IMR-90 (cell line): ENCODE measurements at regions of chr2 and their contacts with region 1.

Region 1: GRCh38 chr2:27596627-27597026 is 13.8 kb downstream of the ZNF512 start:
- DNase-seq: peak; percentile 68
- ATAC-seq: peak; percentile 86
- H3K4me3 ChIP-seq: no peak overlapping the region
- H3K27ac ChIP-seq: no peak overlapping the region; the same call in 1 of the 2 replicates
- H3K4me1 ChIP-seq: peaks cover 11% of the 10 kb centered on the region
- H3K27me3 ChIP-seq: no peaks in the 10 kb centered on the region
- CTCF ChIP-seq: no peak
- POLR2A ChIP-seq: no peak
- RAD21 ChIP-seq: no peak

Region 2: DNA sequence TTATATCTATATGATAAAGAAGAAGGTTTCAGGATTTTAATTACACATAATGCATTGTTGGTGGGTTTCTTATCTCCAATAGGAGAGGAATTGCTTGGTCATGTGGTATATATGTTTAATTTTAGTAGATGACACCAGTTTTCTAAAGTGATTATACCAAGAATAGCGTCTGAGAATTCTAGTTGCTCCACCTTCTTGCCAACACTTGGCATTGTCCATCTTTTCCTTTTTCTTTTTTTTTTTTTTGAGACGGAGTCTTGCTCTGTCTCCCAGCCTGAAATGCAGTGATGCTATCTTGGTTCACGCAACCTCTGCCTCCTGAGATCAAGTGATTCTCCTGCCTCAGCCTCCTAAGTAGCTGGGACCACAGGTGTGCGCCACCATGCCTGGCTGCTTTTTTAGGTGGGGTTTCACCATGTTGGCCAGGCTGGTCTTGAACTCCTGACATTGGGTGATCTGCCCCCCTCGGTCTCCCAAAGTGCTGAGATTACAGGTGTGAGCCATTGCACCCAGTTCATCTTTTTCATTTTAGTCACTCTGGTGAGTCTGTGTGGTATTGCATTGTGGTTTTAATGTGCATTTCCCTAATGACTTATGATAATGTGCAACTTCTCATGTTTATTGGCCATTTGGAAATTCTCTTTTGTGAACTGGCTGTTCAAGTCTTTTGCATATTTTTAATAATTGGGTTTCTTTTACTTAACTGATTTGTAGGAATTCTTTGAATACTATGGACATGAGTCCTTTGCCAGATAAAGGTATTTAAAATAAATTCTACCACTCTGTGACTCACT is 51.1 kb before region 1 on chr2:
- CTCF ChIA-PET with region 1: no interaction called
- POLR2A ChIA-PET with region 1: interaction called, 10 read pairs
- dilution Hi-C with region 1: no loop called
- in situ Hi-C with region 1: no loop called
- intact Hi-C with region 1: no loop called
- DNase-seq: peak; percentile 69
- ATAC-seq: peak; percentile 49; the same call in 1 of the 2 replicates
- H3K4me3 ChIP-seq: no peak overlapping the region
- H3K27ac ChIP-seq: no peak overlapping the region
- H3K4me1 ChIP-seq: no peaks in the 10 kb centered on the region
- H3K27me3 ChIP-seq: no peaks in the 10 kb centered on the region; the same call in 1 of the 2 replicates
- CTCF ChIP-seq: no peak
- POLR2A ChIP-seq: no peak
- RAD21 ChIP-seq: no peak

Region 3: DNA sequence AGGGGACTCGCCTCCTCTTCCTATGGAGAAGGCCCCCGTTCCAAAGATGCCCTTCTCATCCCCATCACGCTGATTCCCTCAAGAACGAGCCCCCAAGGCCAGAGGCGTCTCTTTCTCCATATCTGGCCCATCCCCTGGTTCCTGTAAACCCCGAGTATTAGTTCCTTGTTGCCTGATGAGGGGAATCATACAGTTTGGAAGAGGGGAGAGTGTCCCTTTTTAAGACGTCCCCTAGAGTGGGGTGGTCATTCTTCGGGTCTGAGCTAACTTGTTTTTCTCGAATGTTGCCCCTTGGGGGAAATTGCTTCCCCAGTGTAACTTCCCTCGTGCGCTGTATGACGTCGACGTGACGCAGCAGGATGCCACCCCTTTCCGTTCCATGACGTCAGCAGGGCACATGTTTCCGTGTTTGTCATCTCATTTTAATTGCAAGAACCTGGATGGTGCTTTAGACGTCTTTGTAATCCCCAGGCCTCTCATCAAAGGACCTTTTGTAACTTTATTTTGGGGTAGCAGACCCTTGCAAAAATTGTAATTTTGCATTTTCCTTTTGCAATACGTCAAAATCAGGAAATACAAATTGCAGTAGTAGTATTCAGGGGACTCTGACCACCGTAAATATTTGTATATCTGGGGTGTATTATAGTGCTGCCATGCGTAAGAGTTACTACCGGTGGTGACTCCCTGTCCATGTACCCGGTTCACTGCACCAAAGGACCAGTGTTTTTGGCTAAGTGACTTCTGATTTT is 294.5 kb after region 1 on chr2:
- CTCF ChIA-PET with region 1: no interaction called
- POLR2A ChIA-PET with region 1: no interaction called
- dilution Hi-C with region 1: no loop called
- in situ Hi-C with region 1: no loop called
- intact Hi-C with region 1: no loop called
- DNase-seq: peak; percentile 83
- ATAC-seq: peak; percentile 5
- H3K4me3 ChIP-seq: peak overlapping the region; percentile 85
- H3K27ac ChIP-seq: peak overlapping the region; percentile 81
- H3K4me1 ChIP-seq: peaks cover 2% of the 10 kb centered on the region; the same call in 1 of the 2 replicates
- H3K27me3 ChIP-seq: no peaks in the 10 kb centered on the region
- CTCF ChIP-seq: no peak
- POLR2A ChIP-seq: no peak
- RAD21 ChIP-seq: no peak

Region 4: GRCh38 chr2:27989141-27989540 is 392.5 kb after region 1 on chr2:
- CTCF ChIA-PET with region 1: no interaction called
- POLR2A ChIA-PET with region 1: no interaction called
- dilution Hi-C with region 1: no loop called
- in situ Hi-C with region 1: no loop called
- intact Hi-C with region 1: no loop called
- DNase-seq: no peak
- ATAC-seq: no peak
- H3K4me3 ChIP-seq: no peak overlapping the region
- H3K27ac ChIP-seq: no peak overlapping the region
- H3K4me1 ChIP-seq: peaks cover 8% of the 10 kb centered on the region
- H3K27me3 ChIP-seq: no peaks in the 10 kb centered on the region
- CTCF ChIP-seq: no peak
- POLR2A ChIP-seq: no peak
- RAD21 ChIP-seq: no peak